ENCODE measurements at regions of chr2 and their contacts with region 1.

Region 1: DNA sequence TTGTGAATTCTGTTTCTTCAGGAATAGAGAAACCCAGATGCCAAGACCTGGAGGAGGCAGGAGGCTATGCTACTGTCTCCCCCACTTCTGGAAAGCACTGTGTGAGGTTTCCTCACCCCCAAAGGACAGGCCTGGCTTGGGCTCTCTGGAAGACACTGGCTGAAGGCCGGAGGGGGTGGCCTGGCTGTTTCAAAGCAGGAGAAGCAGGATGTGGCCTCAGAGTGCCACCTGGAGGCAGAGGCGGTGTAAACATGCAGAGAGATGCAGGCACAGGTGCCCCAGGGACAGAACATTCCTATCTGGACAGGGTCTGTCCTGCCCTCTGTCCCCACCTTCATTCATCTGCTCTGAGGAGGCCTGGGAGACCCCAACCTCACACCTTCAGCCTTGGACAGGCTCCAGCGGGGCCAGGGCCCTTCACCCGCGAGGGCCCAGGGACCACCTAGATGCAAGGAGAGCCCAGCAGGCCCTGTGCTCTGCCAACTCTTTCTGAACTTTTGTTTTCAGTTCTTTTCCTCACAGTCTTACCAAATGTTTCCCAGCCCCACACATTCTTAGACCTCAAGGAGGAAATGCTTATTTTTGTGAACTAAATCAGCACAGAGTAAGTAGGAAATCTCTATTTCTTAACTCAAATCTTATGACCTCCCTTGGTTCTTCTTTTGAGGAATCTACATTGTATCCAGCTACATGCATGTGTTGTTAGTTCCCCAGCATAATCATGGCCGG is 79.2 kb downstream of the LONRF2 start:
- DNase-seq: peak; percentile 74 to 82
- H3K4me3 ChIP-seq: no peak overlapping the region
- H3K27ac ChIP-seq: no peak overlapping the region
- H3K4me1 ChIP-seq: peaks cover 0 to 7% (median 3%) of the 10 kb centered on the region in 4 donors
- H3K27me3 ChIP-seq: no peaks in the 10 kb centered on the region
- CTCF ChIP-seq: peak in 5 of 7 experiments; percentile 42 to 80 (median 68)
- EP300 ChIP-seq: no peak
- POLR2A ChIP-seq: no peak

Region 2: DNA sequence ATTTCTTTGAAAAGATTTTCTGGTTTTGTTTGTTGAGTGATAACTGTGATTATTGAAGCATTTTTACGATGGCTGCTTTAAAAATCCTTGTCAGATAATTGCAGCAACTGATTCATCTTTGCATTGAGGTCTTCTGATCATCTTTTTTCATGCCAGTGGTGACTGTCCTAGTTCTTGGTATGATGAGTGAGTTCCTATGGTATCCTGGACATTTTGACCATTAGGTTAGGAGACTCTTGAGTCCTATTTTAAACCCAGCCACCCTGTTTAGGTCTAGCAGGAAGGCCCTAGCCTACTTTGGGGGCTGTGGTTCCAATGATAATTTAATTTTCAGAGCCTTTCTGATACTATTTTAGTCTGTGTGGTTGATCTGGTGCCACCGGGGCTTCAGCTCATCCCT is 680.5 kb before region 1 on chr2:
- intact Hi-C with region 1: loop called (anchors 5 kb)
- DNase-seq: no peak
- H3K4me3 ChIP-seq: no peak overlapping the region
- H3K27ac ChIP-seq: no peak overlapping the region
- H3K4me1 ChIP-seq: peaks cover 0 to 7% (median 3%) of the 10 kb centered on the region in 4 donors
- H3K27me3 ChIP-seq: no peaks in the 10 kb centered on the region
- CTCF ChIP-seq: no peak
- EP300 ChIP-seq: no peak
- POLR2A ChIP-seq: no peak

Region 3: GRCh38 chr2:99819766-99820165 is 423.3 kb before region 1 on chr2:
- intact Hi-C with region 1: loop called (anchors 10 kb)
- DNase-seq: no peak
- H3K4me3 ChIP-seq: no peak overlapping the region
- H3K27ac ChIP-seq: no peak overlapping the region
- H3K4me1 ChIP-seq: no peaks in the 10 kb centered on the region
- H3K27me3 ChIP-seq: no peaks in the 10 kb centered on the region
- CTCF ChIP-seq: no peak
- EP300 ChIP-seq: no peak
- POLR2A ChIP-seq: no peak